ENCODE measurements at regions of chr10 and their contacts with region 1.

Region 1: DNA sequence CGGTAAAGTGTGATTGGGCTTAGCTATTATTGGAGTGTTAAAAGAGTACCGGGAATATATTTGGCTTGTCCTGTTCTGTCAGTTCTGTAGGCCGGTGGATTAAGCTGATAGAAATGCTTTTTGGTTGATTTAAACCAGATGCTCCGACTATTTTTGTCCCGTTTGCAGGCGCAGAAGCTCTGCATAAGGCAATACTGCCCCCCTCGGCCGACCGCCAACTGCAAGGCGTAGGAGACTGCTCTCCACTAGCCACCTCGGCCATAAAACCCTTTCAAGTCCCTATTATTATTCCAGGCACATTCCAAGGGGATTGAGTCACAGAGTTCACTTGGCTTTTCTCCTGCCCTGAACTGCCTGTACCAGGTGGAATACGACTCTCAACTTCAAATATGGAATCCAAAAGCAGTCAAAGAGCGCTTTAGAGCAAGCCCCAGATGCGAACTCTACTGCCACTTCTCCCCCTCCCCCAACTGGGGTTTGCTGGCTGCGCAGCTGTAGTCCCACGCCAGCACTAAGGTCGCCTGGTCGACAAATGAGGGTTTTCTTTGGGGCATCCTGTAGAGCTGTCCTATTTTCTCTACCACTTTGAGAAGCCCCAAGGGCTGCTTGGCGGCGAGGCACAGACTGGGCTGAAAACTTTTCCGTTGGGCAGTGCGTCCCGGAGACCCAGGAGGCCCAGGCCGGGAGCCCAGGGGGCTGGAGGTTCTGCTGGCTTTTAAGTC is 108.3 kb downstream of the REEP3 start:
- DNase-seq: peak; percentile 96
- H3K4me3 ChIP-seq: peak overlapping the region; percentile 53
- H3K27ac ChIP-seq: peak overlapping the region; percentile 97
- H3K4me1 ChIP-seq: no peaks in the 10 kb centered on the region
- H3K27me3 ChIP-seq: no peaks in the 10 kb centered on the region
- CTCF ChIP-seq: peak; percentile 72

Region 2: DNA sequence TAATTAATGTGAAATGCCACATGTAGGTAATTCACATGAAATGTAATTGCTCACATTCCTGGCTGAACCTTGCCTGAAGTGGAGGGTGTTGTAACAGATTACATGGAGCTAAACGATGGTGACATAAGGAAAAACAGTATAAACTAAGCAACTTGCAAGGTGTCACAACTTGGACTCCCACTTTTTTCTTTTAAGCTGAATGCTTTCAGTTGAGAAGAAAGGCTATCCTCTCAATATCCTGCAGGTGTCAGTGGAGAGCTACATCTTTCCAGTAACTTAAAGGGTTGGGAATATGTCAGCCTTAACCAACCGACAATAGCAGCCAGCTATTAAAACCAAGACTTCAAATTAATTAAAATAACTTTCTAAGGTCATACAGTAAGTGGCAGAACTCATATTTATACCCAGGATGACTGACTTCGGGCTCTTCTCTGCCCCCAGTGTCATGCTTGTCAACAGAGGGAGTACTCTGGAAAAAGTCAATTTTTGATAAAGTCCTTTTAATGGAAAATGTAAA is 462.7 kb before region 1 on chr10:
- intact Hi-C with region 1: loop called (anchors 5 kb)
- DNase-seq: peak; percentile 27
- H3K4me3 ChIP-seq: no peak overlapping the region
- H3K27ac ChIP-seq: no peak overlapping the region
- H3K4me1 ChIP-seq: no peaks in the 10 kb centered on the region
- H3K27me3 ChIP-seq: no peaks in the 10 kb centered on the region
- CTCF ChIP-seq: peak; percentile 80

Region 3: GRCh38 chr10:63217120-63217605 is 412.4 kb before region 1 on chr10:
- intact Hi-C with region 1: loop called (anchors 10 kb)
- DNase-seq: no peak
- H3K4me3 ChIP-seq: no peak overlapping the region
- H3K27ac ChIP-seq: no peak overlapping the region
- H3K4me1 ChIP-seq: peaks cover 4% of the 10 kb centered on the region
- H3K27me3 ChIP-seq: no peaks in the 10 kb centered on the region
- CTCF ChIP-seq: peak; percentile 75

Region 4: DNA sequence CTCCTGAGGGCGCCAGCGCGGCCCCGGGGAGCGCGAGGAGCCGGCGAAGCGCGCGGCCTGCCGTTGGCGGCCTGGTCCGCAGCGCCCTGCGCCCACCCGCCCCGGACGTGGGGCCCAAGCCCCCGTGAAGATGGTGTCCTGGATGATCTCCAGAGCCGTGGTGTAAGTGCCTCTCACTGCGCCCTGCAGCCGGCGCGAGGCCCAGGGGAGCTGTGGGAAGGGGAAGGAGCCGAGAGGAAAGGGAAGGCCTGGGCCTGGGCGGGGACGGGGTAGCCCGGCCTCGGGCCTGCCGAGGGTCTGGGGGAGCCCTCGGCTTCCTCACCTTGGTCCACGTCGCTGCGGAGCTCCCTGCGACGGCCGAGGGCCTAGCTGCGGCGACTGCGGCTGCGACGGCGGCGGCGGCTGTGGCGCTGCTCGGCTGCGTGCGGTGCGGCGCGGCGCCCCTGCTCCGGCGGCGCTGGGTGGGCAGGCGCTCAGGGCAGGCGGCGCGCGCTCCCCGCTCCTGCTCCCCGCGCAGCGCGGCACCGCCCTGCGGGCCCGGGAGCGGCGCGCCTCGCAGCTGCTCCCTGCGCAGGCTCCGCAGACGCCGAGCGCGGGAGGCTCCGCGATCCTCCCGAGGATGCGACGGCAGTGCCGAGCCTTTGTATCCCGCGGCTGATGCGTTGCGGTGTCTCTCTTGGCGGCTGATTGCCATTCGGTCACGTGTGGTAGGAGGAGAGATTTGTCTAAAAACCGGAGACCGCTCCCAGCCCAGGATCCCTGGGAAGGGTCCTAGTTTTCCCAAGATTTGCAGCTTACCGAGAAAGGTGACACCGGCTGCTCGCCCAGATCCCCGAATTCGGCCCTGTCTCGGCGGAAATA is 107.9 kb before region 1 on chr10:
- intact Hi-C with region 1: loop called (anchors 5 kb)
- DNase-seq: peak; percentile 63
- H3K4me3 ChIP-seq: peak overlapping the region; percentile 63
- H3K27ac ChIP-seq: peak overlapping the region; percentile 96
- H3K4me1 ChIP-seq: no peaks in the 10 kb centered on the region
- H3K27me3 ChIP-seq: no peaks in the 10 kb centered on the region
- CTCF ChIP-seq: no peak

Region 5: DNA sequence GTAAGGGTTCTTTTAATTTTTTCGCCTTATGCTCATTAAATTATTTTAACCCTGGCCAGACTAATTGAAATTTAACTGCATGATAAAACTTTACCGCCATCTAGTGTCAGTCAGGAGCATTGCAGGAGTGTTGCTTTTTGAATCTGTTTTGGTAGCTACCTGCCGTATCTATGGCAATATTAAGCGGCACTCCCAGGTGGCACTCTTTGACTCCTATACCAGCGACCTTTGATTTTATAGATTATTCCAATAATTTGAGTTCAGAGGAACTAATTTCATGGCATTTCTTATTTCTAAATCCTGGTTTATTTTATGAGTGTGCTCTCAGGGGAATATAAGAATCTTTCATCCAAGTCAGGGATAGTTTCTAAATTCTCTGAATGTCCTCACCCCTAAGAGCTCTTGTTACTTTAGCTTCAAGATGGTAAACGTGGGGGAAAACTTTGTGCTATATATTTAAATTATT is 90.6 kb after region 1 on chr10:
- intact Hi-C with region 1: loop called (anchors 5 kb)
- DNase-seq: peak; percentile 69
- H3K4me3 ChIP-seq: no peak overlapping the region
- H3K27ac ChIP-seq: no peak overlapping the region
- H3K4me1 ChIP-seq: peaks cover 6% of the 10 kb centered on the region
- H3K27me3 ChIP-seq: no peaks in the 10 kb centered on the region
- CTCF ChIP-seq: peak; percentile 97

Region 6: GRCh38 chr10:63788152-63788821 is 158.8 kb after region 1 on chr10:
- intact Hi-C with region 1: no loop called
- DNase-seq: no peak
- H3K4me3 ChIP-seq: no peak overlapping the region
- H3K27ac ChIP-seq: no peak overlapping the region
- H3K4me1 ChIP-seq: no peaks in the 10 kb centered on the region
- H3K27me3 ChIP-seq: no peaks in the 10 kb centered on the region
- CTCF ChIP-seq: no peak